Endothelial cell of umbilical vein (primary cell): ENCODE measurements at regions of chr18 and their contacts with region 1.

Region 1: GRCh38 chr18:46173393-46174341 is 69.5 kb downstream of the HAUS1 start:
- DNase-seq: peak; percentile 90
- H3K4me3 ChIP-seq: peak overlapping the region; percentile 76 to 89 (median 84)
- H3K27ac ChIP-seq: peak overlapping the region; percentile 78
- H3K4me1 ChIP-seq: peaks cover 15% of the 10 kb centered on the region
- H3K27me3 ChIP-seq: no peaks in the 10 kb centered on the region
- CTCF ChIP-seq: peak; percentile 84 to 97
- POLR2A ChIP-seq: peak; percentile 75

Region 2: DNA sequence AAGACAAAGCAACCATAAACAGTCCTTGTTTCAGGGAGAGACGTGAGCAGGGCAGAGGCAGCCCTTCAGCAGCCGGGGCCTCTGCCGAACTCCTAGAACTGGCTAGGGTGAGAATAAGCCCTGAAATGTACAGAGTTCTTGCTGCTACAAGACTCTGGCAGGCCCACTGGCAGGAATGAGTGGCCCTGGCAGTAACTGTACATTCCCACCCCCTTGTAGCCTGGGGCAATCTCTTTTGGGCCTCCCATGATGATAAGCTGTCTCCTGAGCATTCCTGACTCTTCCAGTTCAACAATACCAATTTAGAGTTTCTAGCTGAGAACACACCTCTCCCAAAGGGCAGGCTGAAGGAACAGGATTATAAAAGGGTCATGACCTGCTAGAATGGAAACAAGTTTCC is 15.2 kb before region 1 on chr18:
- CTCF ChIA-PET with region 1: interaction called, 43 read pairs
- POLR2A ChIA-PET with region 1: no interaction called
- dilution Hi-C with region 1: no loop called
- intact Hi-C with region 1: no loop called
- DNase-seq: no peak
- H3K4me3 ChIP-seq: no peak overlapping the region
- H3K27ac ChIP-seq: no peak overlapping the region
- H3K4me1 ChIP-seq: no peaks in the 10 kb centered on the region
- H3K27me3 ChIP-seq: no peaks in the 10 kb centered on the region
- CTCF ChIP-seq: no peak
- POLR2A ChIP-seq: no peak

Region 3: DNA sequence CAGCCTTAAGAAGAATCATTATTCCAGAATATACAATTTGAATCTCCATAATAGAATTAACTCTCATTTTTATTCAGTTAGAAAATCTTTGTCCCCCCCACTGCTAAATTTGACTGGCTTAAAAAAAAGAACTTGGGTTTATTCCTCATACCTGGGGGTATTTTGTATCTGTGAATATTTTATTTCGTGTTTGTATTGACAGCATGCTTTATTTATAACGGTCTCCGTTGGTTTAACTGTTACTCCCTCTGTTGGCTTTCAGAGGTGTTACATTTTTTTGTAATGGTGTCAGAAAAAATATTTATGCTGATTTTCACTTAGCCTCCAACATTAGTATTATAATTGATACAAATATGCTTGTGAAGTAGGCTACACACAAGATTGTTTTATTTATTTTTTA is 39.6 kb after region 1 on chr18:
- CTCF ChIA-PET with region 1: interaction called, 132 read pairs
- POLR2A ChIA-PET with region 1: no interaction called
- dilution Hi-C with region 1: no loop called
- intact Hi-C with region 1: loop called (anchors 1 kb)
- DNase-seq: peak; percentile 32
- H3K4me3 ChIP-seq: no peak overlapping the region
- H3K27ac ChIP-seq: no peak overlapping the region
- H3K4me1 ChIP-seq: peaks cover 12% of the 10 kb centered on the region
- H3K27me3 ChIP-seq: no peaks in the 10 kb centered on the region
- CTCF ChIP-seq: peak in 1 of 2 donors; percentile 32
- POLR2A ChIP-seq: no peak

Region 4: DNA sequence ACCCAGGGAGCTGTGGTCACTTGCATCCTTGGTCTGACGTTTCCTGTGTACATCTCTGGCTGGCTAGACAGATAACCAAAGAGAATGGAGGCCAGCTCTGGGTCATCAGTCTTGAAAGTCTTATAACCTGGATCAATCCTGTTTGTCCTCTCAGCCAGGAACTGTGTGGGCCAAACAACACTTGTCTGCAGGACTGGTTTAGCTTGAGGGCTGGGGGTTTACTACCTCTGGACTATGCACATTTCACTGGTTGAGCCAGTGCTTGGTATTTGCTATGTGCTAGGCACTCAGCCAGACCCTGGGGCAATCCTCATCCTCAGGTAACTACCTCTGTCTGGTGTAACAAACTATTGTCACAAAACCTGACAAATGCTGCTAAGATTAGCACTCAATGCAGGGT is 100.2 kb after region 1 on chr18:
- CTCF ChIA-PET with region 1: interaction called, 36 read pairs
- POLR2A ChIA-PET with region 1: no interaction called
- dilution Hi-C with region 1: no loop called
- intact Hi-C with region 1: no loop called
- DNase-seq: no peak
- H3K4me3 ChIP-seq: no peak overlapping the region
- H3K27ac ChIP-seq: no peak overlapping the region
- H3K4me1 ChIP-seq: peaks cover 3% of the 10 kb centered on the region
- H3K27me3 ChIP-seq: no peaks in the 10 kb centered on the region
- CTCF ChIP-seq: no peak
- POLR2A ChIP-seq: no peak

Region 5: GRCh38 chr18:46291149-46291548 is 117.5 kb after region 1 on chr18:
- CTCF ChIA-PET with region 1: interaction called, 10 read pairs
- POLR2A ChIA-PET with region 1: no interaction called
- dilution Hi-C with region 1: no loop called
- intact Hi-C with region 1: no loop called
- DNase-seq: no peak
- H3K4me3 ChIP-seq: no peak overlapping the region
- H3K27ac ChIP-seq: no peak overlapping the region
- H3K4me1 ChIP-seq: no peaks in the 10 kb centered on the region
- H3K27me3 ChIP-seq: no peaks in the 10 kb centered on the region
- CTCF ChIP-seq: no peak
- POLR2A ChIP-seq: no peak

Region 6: GRCh38 chr18:46622999-46623398 is 449.3 kb after region 1 on chr18:
- CTCF ChIA-PET with region 1: interaction called, 17 read pairs
- POLR2A ChIA-PET with region 1: no interaction called
- dilution Hi-C with region 1: no loop called
- intact Hi-C with region 1: loop called (anchors 1 kb)
- DNase-seq: no peak
- H3K4me3 ChIP-seq: no peak overlapping the region
- H3K27ac ChIP-seq: no peak overlapping the region
- H3K4me1 ChIP-seq: peaks cover 7% of the 10 kb centered on the region
- H3K27me3 ChIP-seq: no peaks in the 10 kb centered on the region
- CTCF ChIP-seq: no peak
- POLR2A ChIP-seq: no peak

Region 7: GRCh38 chr18:47658498-47658897 is 1484.8 kb after region 1 on chr18:
- CTCF ChIA-PET with region 1: no interaction called
- POLR2A ChIA-PET with region 1: no interaction called
- dilution Hi-C with region 1: no loop called
- intact Hi-C with region 1: no loop called
- DNase-seq: no peak
- H3K4me3 ChIP-seq: no peak overlapping the region
- H3K27ac ChIP-seq: no peak overlapping the region
- H3K4me1 ChIP-seq: no peaks in the 10 kb centered on the region
- H3K27me3 ChIP-seq: no peaks in the 10 kb centered on the region
- CTCF ChIP-seq: no peak
- POLR2A ChIP-seq: no peak